PC-9 (cell line): ENCODE measurements at regions of chr2 and their contacts with region 1.

Region 1: DNA sequence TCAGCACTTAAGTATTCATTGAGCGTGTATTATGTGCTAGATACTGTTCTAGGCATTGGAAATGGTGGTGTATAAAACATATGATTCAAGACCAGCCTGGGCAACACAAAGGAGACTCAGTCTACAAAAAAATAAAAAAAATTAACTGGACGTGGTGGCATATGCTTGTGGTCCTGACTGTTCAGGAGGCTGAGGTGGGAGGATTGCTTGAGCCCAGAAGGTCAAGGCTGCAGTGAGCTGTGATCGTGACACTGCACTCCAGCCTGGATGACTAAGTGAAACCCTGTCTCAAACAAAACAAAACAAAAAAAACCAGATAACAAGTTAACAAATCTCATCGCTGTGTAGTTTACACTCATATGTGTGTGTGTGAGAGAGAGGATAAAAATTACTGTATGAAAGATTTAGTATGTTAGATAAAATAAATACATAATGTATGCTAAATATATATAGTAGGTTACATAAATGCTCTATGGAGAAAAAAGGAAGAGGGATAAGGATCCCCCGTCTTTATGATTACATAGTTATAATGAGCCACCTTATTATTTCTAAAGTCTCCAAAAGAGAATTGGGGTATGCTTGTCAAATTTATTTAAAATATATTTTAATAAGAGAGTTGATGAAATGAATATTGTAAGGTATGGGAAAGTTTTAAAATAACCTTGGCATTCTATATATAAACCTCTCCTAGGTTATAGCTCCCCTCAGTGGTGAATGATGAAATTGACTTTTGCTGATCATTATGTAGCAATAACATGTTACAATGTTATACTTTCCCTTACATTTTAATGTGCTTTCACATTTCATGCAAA is 69.2 kb downstream of the EHBP1 start:
- DNase-seq: peak; percentile 29 to 54
- H3K4me3 ChIP-seq: no peak overlapping the region
- H3K27ac ChIP-seq: peak overlapping the region; percentile 68
- H3K4me1 ChIP-seq: peaks cover 5% of the 10 kb centered on the region; the same call in 1 of the 2 replicates
- H3K27me3 ChIP-seq: no peaks in the 10 kb centered on the region
- CTCF ChIP-seq: peak; percentile 94

Region 2: DNA sequence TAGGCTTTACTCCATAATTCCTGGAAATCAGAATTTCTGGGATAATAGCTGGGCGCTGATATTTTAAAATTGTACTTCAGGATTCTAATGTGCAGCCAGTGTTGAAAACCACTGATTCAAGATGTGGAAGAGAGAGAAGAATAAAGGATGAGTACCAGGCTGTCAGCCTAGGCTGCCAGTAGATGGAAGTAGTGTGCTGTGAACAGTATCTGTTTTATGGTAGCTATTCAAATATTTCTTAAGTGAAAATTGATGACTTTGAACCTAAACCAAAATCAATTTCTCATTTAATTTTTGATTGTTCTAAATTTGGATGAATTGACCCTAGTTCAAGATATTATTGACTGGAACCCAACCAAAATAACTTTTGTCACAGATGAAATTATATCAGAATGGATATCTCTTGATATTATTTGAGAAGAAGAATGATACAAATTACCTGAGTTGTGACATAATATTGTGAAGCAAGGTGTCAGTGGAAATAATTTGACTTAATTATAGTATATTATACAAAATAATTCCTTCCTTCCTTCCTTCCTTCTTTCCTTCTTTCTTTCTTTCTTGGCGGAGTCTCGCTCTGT is 781.2 kb before region 1 on chr2:
- CTCF ChIA-PET with region 1: no interaction called
- POLR2A ChIA-PET with region 1: no interaction called
- intact Hi-C with region 1: loop called (anchors 2 kb)
- DNase-seq: peak; percentile 26 to 53
- H3K4me3 ChIP-seq: no peak overlapping the region
- H3K27ac ChIP-seq: no peak overlapping the region
- H3K4me1 ChIP-seq: no peaks in the 10 kb centered on the region
- H3K27me3 ChIP-seq: no peaks in the 10 kb centered on the region
- CTCF ChIP-seq: peak; percentile 91

Region 3: DNA sequence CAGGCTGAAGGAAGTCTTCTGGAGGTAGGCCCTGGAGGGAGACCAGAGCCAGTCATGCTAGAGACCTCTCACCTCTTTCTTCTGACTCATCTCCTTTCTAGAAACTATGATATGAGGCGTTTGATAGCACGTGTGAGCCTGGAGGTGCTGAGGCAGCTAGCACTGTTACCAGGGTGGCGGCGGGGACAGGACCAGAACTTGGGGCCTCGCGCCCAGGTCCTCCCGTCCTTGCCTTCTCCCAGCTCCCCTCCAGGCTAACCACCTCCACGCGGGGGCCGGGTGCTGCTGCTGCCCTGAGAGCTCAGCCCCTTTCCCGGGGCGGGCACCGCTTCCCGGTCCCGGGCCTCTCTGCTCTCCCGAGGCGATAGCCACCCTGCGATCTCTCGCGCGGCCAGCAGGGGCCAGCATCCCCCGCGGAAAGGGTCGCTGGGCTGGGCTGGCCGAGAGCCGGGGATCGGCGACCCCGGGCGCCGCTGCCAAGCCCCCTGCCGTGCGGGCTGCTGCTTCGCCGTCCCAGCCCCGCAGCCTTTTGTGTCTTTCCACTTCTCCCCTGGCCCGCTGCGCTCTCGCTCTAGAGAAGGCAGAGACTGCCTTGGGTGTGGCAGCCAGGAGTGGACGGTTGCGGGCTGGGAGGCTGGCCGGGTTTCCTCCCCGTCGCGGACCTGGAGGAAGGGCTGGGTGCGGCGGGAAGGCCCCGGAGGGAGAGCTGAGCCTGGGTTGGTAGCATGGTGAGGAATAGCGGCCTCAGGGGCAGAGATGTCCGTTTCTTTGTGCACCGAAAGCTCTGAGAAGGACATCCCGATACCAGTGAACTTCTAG is 317.8 kb before region 1 on chr2:
- CTCF ChIA-PET with region 1: interaction called, 14 read pairs
- POLR2A ChIA-PET with region 1: no interaction called
- intact Hi-C with region 1: loop called (anchors 1 kb)
- DNase-seq: peak; percentile 85 to 88
- H3K4me3 ChIP-seq: peak overlapping the region; percentile 72
- H3K27ac ChIP-seq: peak overlapping the region; percentile 72
- H3K4me1 ChIP-seq: peaks cover 16% of the 10 kb centered on the region
- H3K27me3 ChIP-seq: no peaks in the 10 kb centered on the region
- CTCF ChIP-seq: peak; percentile 98

Region 4: GRCh38 chr2:62654423-62654791 is 120.4 kb before region 1 on chr2:
- CTCF ChIA-PET with region 1: no interaction called
- POLR2A ChIA-PET with region 1: no interaction called
- intact Hi-C with region 1: loop called (anchors 1 kb)
- DNase-seq: peak; percentile 69 to 96
- H3K4me3 ChIP-seq: 0 out of 2 replicates have a peak overlapping the region, but pooled peaks have one; percentile 14
- H3K27ac ChIP-seq: peak overlapping the region; percentile 68
- H3K4me1 ChIP-seq: peaks cover 33% of the 10 kb centered on the region
- H3K27me3 ChIP-seq: no peaks in the 10 kb centered on the region
- CTCF ChIP-seq: no peak

Region 5: DNA sequence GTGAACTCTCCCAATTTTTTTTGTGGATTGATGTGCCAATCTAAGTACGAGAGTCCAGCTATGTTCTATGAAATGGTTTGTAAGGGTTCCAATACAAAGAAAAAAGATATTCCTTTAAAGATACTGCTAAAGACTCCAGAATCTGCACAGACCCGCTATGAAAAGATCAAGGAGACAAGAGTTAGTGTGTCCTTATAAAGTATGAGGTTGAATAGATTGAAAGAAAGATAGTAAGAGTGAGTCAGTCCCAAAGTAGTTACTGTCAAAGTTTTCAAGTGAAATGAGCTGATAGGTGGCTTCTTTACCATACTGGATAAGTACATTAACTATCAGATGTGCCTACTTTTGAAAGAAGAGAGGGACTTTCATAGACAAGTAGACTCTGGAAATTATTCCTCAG is 87.1 kb before region 1 on chr2:
- CTCF ChIA-PET with region 1: no interaction called
- POLR2A ChIA-PET with region 1: no interaction called
- intact Hi-C with region 1: no loop called
- DNase-seq: peak in 1 of 2 experiments; percentile 67
- H3K4me3 ChIP-seq: no peak overlapping the region
- H3K27ac ChIP-seq: no peak overlapping the region
- H3K4me1 ChIP-seq: peaks cover 16% of the 10 kb centered on the region
- H3K27me3 ChIP-seq: no peaks in the 10 kb centered on the region
- CTCF ChIP-seq: no peak

Region 6: GRCh38 chr2:62705007-62705829 is 69.5 kb before region 1 on chr2 and contains the start of gene EHBP1:
- CTCF ChIA-PET with region 1: no interaction called
- POLR2A ChIA-PET with region 1: no interaction called
- intact Hi-C with region 1: loop called (anchors 2 kb)
- DNase-seq: peak; percentile 99 to 100
- H3K4me3 ChIP-seq: peak within 1 kb of the TSS; percentile 73
- H3K27ac ChIP-seq: peak within 1 kb of the TSS; percentile 80
- H3K4me1 ChIP-seq: peaks cover 37% of the 10 kb centered on the region
- H3K27me3 ChIP-seq: no peaks in the 10 kb centered on the region
- CTCF ChIP-seq: no peak
- total RNA-seq, gene EHBP1: 79.3 and 100 TPM in 2 replicates

Region 7: DNA sequence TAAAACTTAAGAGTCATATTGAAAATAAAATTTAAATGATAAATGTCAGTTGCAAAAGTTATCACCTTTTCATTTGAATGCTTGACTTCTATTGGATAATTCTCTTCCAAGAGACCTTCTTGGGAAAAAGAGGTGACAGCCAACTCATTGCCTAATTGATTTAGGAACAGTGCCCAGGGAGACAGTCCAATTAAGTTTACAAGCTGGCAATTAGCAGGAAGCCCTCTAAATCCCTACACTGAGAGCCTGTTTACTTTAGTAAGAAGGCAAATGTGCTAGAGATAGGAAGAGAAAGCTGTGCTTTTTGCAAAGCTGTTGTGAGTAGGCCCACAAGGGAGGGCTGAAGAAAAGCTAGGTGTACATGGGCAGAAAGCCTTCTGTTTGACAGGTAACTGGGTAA is 624.4 kb after region 1 on chr2:
- CTCF ChIA-PET with region 1: no interaction called
- POLR2A ChIA-PET with region 1: no interaction called
- intact Hi-C with region 1: no loop called
- DNase-seq: no peak
- H3K4me3 ChIP-seq: no peak overlapping the region
- H3K27ac ChIP-seq: no peak overlapping the region
- H3K4me1 ChIP-seq: no peaks in the 10 kb centered on the region
- H3K27me3 ChIP-seq: no peaks in the 10 kb centered on the region
- CTCF ChIP-seq: no peak